ENCODE measurements at regions of chr2 and their contacts with region 1.

Region 1: DNA sequence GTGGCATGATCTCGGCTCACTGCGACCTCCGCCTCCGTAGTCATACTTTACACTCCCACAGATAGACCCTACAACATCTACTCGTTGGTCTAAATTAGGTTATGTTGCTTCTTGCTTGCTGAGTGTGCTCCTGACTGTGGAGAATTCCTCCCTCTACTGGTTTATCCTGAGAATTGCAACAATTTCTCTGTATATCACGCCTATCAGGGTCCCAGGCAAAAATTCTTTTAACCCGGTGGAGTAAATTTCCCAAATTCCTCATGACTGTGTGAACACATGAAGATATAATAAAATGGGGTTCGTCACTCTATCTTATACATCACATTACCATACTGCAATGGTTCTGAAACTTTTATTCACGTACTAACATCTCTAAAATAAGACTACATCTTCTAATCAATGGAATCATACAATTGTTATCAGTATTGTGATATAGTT is 156.7 kb downstream of the EVA1A start:
- DNase-seq: no peak
- H3K4me3 ChIP-seq: no peak overlapping the region
- H3K27ac ChIP-seq: no peak overlapping the region
- H3K4me1 ChIP-seq: peaks cover 0 to 5% (median 0%) of the 10 kb centered on the region in 4 donors
- H3K27me3 ChIP-seq: no peaks in the 10 kb centered on the region
- CTCF ChIP-seq: peak; percentile 39 to 77 (median 65)
- EP300 ChIP-seq: no peak
- POLR2A ChIP-seq: no peak

Region 2: DNA sequence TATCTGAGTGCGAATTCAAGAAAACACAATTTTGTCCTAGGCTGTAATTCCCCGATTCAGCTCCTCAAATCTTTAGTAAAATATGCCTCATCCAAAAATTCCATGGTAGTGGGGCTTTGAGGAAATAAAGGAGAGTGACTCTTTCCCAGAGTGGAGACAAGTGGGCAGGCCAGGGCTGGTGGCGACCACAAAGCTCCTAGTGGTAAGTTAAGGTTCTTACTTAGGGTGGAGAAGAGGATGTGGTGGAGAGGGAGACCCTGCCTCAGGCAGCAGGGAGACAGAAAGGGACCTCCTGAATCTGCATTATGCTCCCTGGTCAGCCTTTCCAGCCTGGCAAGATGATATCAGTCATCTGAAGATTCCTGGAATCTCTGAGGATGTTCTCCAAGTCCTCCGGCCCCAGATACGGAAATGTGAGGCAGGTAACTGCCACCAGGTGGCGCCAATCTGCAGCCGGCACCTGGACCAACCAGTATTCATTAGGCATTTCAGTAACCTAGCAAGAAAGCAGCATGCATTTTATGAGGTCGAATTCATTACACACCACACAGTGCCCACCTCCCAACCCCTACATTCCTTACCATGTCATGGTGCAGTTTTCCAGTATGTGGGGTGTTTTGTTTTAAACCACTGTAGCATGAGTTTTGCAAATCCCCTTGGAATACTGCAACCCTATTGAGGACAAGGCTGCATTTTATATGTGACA is 339.2 kb before region 1 on chr2:
- intact Hi-C with region 1: loop called (anchors 5 kb)
- DNase-seq: peak; percentile 65
- H3K4me3 ChIP-seq: no peak overlapping the region
- H3K27ac ChIP-seq: no peak overlapping the region
- H3K4me1 ChIP-seq: peaks cover 0 to 13% (median 0%) of the 10 kb centered on the region in 4 donors
- H3K27me3 ChIP-seq: no peaks in the 10 kb centered on the region
- CTCF ChIP-seq: peak in 3 of 4 experiments; percentile 34 to 51 (median 49)
- EP300 ChIP-seq: no peak
- POLR2A ChIP-seq: no peak

Region 3: DNA sequence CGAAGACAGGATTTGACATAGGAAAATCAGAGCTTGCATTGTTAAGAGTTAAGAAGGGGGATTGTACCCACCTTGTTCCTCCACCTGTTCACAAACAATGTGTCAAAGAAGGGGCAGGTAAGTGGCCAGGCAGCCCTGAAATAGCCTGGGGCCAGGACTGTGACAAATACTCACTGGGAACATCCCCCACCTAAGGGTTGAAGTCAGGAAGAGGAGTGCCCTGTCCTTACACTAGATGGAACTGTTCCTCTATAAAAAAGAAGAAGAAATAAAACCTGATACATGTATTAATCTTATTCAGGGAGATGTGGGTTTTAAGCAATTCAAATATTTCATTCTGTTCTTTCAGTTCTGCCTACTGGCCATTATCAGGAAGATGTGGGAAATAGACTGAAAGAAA is 246.6 kb before region 1 on chr2:
- intact Hi-C with region 1: loop called (anchors 5 kb)
- DNase-seq: no peak
- H3K4me3 ChIP-seq: no peak overlapping the region
- H3K27ac ChIP-seq: no peak overlapping the region
- H3K4me1 ChIP-seq: peaks cover 0 to 11% (median 8%) of the 10 kb centered on the region in 4 donors
- H3K27me3 ChIP-seq: no peaks in the 10 kb centered on the region
- CTCF ChIP-seq: peak in 1 of 4 experiments; percentile 13
- EP300 ChIP-seq: no peak
- POLR2A ChIP-seq: no peak

Region 4: DNA sequence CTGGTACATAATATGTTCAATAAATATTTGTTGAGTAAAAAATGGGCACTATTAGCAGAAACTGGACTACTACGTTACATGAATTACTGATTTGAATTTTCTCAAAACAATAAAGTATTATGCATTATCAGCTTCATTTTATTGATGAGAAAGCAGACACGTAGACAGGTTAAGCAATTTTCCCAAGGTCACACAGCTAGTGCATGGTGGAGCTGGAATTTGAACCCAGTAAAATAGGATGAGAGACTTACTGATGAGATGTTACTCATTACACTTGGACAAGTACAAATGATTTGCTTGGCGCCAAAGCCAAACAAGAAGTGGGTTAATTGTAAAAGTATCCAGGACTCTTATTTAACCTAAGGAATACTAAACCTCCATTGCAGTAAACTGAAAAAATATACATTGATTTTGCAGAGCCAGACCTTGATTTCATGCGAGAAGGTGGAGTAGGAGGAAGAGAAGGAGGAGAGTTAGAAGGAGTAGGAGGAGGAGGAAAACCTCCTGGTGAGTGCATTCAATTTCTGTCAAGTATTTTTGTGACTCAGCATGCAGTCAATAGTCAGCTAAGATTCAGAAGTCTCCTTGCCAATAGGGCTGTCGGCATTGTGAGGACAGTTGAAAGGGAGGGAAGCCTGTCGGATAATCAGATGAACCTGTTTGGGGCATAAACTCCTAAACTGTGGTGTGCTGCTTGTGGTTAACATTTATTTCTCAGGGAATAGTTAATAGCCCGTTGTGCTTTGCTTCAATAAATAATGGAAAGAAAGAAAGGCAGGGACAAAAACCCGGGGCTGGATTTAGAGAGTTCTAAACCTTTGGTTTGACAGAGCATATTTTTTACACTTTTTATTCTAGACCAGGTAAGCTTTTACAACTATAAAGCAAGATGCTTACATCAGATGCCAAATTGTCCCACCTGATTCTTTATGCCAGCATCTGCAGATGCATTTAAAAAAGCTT is 127.6 kb before region 1 on chr2:
- intact Hi-C with region 1: no loop called
- DNase-seq: no peak
- H3K4me3 ChIP-seq: no peak overlapping the region
- H3K27ac ChIP-seq: no peak overlapping the region
- H3K4me1 ChIP-seq: no peaks in the 10 kb centered on the region
- H3K27me3 ChIP-seq: no peaks in the 10 kb centered on the region
- CTCF ChIP-seq: no peak
- EP300 ChIP-seq: no peak
- POLR2A ChIP-seq: no peak